PC-9 (cell line): ENCODE measurements at regions of chr3 and their contacts with region 1.

Region 1: DNA sequence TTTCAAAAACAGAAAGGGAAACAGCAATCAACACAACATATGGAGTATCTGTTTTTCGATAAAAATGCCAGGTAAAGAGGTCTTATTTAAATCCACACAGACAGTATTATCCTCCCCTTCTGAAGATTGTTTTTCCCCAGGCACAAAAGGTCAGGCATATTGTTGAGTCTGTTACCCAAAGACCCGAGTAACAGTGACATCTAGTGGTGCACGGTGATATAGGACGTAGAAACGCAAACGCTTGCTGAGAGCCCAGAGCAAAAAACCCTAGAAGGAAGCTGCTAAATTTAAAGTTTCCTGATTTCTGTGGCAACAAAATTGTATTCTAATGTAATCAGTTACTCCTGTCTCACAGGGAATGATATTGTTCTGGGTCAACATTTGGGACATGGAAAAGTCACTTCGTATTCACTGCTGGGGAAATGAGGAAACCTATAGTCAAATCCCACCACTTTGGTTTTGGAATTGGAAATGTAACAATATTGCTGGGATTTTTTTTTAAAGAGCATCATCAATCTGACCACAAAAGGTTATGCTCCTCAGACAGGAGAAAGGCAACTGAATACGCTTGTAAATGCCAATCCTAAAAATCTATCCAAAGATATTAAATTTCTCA is 312.7 kb upstream of the CCDC54 start:
- DNase-seq: peak; percentile 57 to 71
- H3K4me3 ChIP-seq: no peak overlapping the region
- H3K27ac ChIP-seq: no peak overlapping the region
- H3K4me1 ChIP-seq: no peaks in the 10 kb centered on the region
- H3K27me3 ChIP-seq: no peaks in the 10 kb centered on the region
- CTCF ChIP-seq: peak; percentile 98

Region 2: DNA sequence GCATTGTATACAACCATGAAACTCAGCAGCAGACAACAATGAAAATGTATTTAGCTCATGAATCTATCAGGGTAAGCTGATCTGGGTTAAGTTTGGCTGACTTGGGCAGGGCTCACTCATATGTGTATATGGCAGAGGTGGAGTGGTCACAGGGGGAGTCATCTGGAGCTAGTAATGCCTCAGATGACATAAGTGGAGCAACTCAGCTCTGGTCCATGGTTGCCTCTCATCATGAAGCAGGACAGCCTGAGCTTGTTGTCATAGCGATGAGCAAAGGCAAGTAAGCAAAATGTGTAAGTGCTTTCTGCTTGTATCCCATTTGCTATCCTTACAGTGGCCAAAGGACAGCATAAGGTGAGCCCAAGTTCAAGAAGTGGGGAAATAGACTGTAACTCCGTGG is 1633.4 kb before region 1 on chr3:
- CTCF ChIA-PET with region 1: no interaction called
- POLR2A ChIA-PET with region 1: no interaction called
- intact Hi-C with region 1: no loop called
- DNase-seq: no peak
- H3K4me3 ChIP-seq: no peak overlapping the region
- H3K27ac ChIP-seq: no peak overlapping the region
- H3K4me1 ChIP-seq: no peaks in the 10 kb centered on the region
- H3K27me3 ChIP-seq: no peaks in the 10 kb centered on the region
- CTCF ChIP-seq: no peak

Region 3: DNA sequence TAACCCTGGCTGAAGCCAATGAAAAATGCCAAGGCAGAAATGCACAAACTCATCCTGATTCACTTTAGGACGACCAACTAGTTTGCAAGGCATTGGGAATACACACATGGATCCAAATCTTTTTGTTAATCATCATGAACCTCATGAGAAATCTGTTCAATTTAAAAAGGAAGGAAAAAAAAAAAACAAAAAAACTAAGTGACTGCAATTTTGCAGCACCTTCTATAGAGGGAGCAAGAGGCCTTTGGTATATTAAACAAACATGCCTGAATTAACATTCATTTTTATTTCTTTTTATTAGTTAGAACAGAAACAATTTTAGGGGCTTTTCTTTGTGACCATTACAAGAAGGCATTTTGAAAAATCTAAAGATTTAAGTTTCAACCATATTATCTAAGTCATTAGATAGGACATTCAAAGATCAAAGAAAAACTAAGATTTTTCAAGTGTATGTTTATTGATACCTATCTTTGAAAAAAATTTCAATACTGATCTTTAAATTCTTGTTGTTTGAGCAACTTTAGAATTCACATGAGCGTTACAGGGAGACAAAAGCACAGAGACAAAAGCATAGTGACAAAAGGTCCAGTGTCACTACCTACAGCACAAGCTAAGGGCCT is 1378.2 kb before region 1 on chr3:
- CTCF ChIA-PET with region 1: interaction called, 3 read pairs
- POLR2A ChIA-PET with region 1: no interaction called
- intact Hi-C with region 1: loop called (anchors 2 kb)
- DNase-seq: peak in 1 of 2 experiments; percentile 62
- H3K4me3 ChIP-seq: no peak overlapping the region
- H3K27ac ChIP-seq: no peak overlapping the region
- H3K4me1 ChIP-seq: no peaks in the 10 kb centered on the region
- H3K27me3 ChIP-seq: no peaks in the 10 kb centered on the region
- CTCF ChIP-seq: peak; percentile 97

Region 4: DNA sequence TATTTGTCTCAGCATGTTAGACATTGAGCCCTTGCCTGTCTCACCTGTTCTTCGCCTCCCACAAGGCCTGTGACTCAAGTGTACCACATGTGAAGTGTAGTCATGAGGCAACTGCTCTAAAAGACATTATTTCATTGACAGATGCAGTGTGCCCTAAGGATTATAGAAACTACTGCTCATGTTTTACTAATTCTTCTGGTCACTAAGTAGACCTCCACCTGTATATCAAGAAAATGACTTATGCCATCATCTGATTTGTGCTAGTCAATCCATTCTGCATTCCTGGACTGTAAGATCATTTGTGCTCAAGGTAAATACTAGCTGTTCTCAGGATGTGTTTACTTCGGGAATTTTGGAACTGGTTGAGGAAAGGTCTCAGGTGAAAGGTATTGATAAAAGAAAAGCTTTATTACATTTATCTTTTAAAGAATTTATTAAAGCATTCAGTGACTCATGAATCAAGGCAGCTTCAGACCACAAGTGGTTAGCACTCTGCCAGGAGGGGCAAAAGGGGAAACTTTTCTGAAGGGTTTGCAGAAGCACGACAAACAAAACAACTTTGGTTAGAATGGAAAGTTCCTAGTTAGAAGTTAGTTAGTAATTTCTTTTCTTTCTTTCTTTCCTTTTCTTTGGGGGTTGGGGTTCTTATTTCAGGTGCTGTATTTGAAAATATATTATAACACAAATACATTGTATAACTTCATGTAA is 730.5 kb before region 1 on chr3:
- CTCF ChIA-PET with region 1: no interaction called
- POLR2A ChIA-PET with region 1: no interaction called
- intact Hi-C with region 1: loop called (anchors 10 kb)
- DNase-seq: peak; percentile 30 to 97
- H3K4me3 ChIP-seq: peak overlapping the region; percentile 6; the same call in 1 of the 2 replicates
- H3K27ac ChIP-seq: peak overlapping the region; percentile 64
- H3K4me1 ChIP-seq: peaks cover 25% of the 10 kb centered on the region
- H3K27me3 ChIP-seq: no peaks in the 10 kb centered on the region
- CTCF ChIP-seq: no peak

Region 5: DNA sequence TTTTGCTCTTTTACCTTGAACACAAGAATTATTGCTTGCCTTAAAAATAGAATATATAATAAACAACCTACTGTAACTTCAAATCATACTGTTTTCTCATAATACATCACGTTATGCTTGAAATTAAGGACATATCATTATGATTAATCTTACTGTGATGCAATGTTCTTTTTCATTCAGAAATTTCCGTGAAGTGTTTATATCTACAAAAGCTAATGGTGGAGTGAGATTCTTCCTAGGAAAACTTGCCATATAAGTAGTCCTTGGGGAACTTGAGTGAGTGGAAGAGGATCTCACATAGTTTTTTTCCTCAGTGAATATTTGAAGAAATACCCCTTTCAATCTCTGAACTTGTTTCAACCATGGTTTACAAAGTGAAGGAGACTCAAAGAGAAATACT is 697.1 kb before region 1 on chr3:
- CTCF ChIA-PET with region 1: no interaction called
- POLR2A ChIA-PET with region 1: interaction called, 12 read pairs
- intact Hi-C with region 1: no loop called
- DNase-seq: no peak
- H3K4me3 ChIP-seq: no peak overlapping the region
- H3K27ac ChIP-seq: no peak overlapping the region
- H3K4me1 ChIP-seq: no peaks in the 10 kb centered on the region
- H3K27me3 ChIP-seq: no peaks in the 10 kb centered on the region
- CTCF ChIP-seq: no peak

Region 6: DNA sequence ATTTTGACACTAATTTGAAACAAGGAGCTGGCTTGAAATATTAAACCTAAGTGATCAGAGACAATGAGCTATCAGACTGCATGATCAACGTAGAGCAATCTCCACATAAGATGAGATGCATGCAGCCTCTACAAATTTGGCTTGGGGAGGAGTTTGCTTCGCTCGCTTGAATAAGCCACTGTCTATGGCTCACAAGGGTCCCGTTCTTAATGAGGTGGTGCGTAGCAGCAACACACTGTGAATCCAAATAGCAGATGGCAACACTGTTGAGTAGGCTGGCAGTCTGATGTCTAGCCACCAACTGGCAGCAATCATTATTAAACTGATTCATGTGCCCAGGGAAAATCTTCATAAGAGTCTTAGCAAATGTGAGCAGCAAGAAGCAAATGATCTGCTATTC is 187.3 kb after region 1 on chr3:
- CTCF ChIA-PET with region 1: no interaction called
- POLR2A ChIA-PET with region 1: no interaction called
- intact Hi-C with region 1: no loop called
- DNase-seq: no peak
- H3K4me3 ChIP-seq: no peak overlapping the region
- H3K27ac ChIP-seq: no peak overlapping the region
- H3K4me1 ChIP-seq: no peaks in the 10 kb centered on the region
- H3K27me3 ChIP-seq: no peaks in the 10 kb centered on the region
- CTCF ChIP-seq: no peak